Esophagus squamous epithelium (tissue), 5 donors: ENCODE measurements at regions of chr12 and their contacts with region 1.

Region 1: DNA sequence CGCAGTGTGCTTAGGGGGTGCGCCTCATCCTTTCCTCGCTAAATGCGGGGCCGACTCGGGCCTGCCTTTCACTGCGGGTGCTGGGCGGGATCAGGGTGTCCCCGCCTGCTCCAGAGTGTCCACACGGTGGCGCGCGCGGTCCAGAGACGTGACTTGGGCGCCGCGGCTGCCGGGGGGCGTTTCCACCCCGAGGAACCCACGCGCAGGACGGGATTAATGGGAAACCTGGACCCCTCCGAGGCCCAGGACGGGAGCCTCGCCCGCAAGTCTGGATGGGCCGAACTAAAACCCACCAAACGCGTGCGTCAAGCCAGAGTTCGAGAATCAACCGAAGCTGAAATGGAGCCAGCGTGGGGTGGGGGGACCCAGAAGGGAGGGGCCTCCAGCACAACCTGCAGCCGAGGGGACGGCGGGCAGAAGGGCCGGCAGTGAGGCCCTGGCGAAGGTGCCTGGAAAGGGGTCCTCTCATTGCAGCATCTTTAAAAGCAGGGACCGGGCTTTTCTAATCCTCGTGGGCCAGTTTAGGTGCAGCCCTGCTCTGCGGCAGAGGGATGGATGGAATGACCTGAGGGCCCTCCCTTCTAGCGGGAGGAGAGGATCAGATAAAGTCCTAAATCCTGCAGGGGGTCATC is 93.3 kb downstream of the NINJ2 start:
- DNase-seq: no peak
- H3K4me3 ChIP-seq: peak overlapping the region; percentile 36 to 76 (median 62)
- H3K27ac ChIP-seq: peak overlapping the region; percentile 90 to 96 (median 95)
- H3K4me1 ChIP-seq: peaks cover 16 to 59% (median 28%) of the 10 kb centered on the region in 3 donors
- H3K27me3 ChIP-seq: no peaks in the 10 kb centered on the region
- CTCF ChIP-seq: peak; percentile 92 to 99 (median 96)
- POLR2A ChIP-seq: no peak

Region 2: GRCh38 chr12:751192-751998 is 181.5 kb after region 1 on chr12:
- intact Hi-C with region 1: loop called (anchors 5 kb)
- DNase-seq: peak; percentile 48
- H3K4me3 ChIP-seq: peak overlapping the region; percentile 75 to 92 (median 82)
- H3K27ac ChIP-seq: peak overlapping the region; percentile 99 to 100 (median 100)
- H3K4me1 ChIP-seq: peaks cover 6 to 38% (median 8%) of the 10 kb centered on the region in 3 donors
- H3K27me3 ChIP-seq: no peaks in the 10 kb centered on the region
- CTCF ChIP-seq: peak in 5 of 6 experiments; percentile 65 to 85 (median 76)
- POLR2A ChIP-seq: peak in 3 of 4 donors; percentile 32 to 75 (median 54)

Region 3: GRCh38 chr12:818733-819132 is 248.8 kb after region 1 on chr12:
- intact Hi-C with region 1: loop called (anchors 5 kb)
- DNase-seq: no peak
- H3K4me3 ChIP-seq: no peak overlapping the region
- H3K27ac ChIP-seq: peak overlapping the region; percentile 20 to 70 (median 54)
- H3K4me1 ChIP-seq: peaks cover 3 to 67% (median 26%) of the 10 kb centered on the region in 3 donors
- H3K27me3 ChIP-seq: no peaks in the 10 kb centered on the region
- CTCF ChIP-seq: peak in 3 of 6 experiments; percentile 26 to 52 (median 28)
- POLR2A ChIP-seq: no peak

Region 4: GRCh38 chr12:913919-914708 is 344.2 kb after region 1 on chr12:
- intact Hi-C with region 1: loop called (anchors 10 kb)
- DNase-seq: no peak
- H3K4me3 ChIP-seq: no peak overlapping the region
- H3K27ac ChIP-seq: peak overlapping the region in 3 of 4 donors; percentile 19 to 77 (median 57)
- H3K4me1 ChIP-seq: peaks cover 0 to 33% (median 2%) of the 10 kb centered on the region in 3 donors
- H3K27me3 ChIP-seq: no peaks in the 10 kb centered on the region
- CTCF ChIP-seq: no peak
- POLR2A ChIP-seq: no peak

Region 5: GRCh38 chr12:949453-950191 is 379.7 kb after region 1 on chr12 and contains the start of gene RAD52:
- intact Hi-C with region 1: loop called (anchors 10 kb)
- DNase-seq: peak; percentile 73
- H3K4me3 ChIP-seq: peak within 1 kb of the TSS; percentile 55 to 90 (median 74)
- H3K27ac ChIP-seq: peak within 1 kb of the TSS; percentile 83 to 95 (median 94)
- H3K4me1 ChIP-seq: peaks cover 5 to 40% (median 8%) of the 10 kb centered on the region in 3 donors
- H3K27me3 ChIP-seq: no peaks in the 10 kb centered on the region
- CTCF ChIP-seq: peak; percentile 96 to 99 (median 98)
- POLR2A ChIP-seq: peak in 2 of 4 donors; percentile 40 to 67
- total RNA-seq, gene RAD52: 6.2 to 8.0 (median 7.5) TPM